Prostate gland (tissue), 2 donors: ENCODE measurements at regions of chr11 and their contacts with region 1.

Region 1: DNA sequence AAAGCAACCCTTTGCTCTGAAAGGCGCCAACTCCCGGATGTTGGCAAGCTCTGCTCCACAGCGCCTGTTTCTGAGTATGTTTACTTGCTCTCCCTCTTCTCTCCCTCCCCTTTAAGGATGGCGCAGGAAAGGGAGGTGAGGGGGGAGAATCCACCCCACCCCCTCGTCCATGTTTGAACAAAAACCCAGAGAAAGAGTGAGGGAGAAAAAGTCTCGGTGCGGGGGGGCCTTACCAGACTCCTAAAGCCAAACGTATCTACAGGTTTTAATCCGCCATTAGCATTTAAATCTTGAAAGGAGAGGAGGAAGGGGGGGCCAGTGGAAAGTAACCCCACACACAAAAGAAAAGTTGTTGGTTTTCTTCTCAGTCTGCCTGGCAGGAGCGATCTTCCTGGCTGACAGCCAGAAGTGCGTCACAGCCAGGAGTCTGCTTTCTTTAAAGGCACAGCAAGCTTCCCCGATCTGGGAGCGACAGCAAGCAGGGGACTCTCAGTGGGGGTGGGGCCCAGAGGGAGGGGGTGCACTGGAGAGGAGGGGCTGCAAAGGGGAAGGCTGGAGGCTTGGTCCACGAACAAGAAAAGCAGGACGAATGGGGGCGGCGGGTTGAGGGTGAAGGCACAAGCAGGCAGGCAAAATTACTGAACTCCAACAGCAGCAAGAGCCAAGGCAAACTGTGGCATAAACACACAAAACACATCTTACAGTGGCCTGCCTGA is 39.5 kb downstream of the NUMA1 start:
- DNase-seq: peak; percentile 97
- H3K4me3 ChIP-seq: peak overlapping the region; percentile 38 to 51
- H3K27ac ChIP-seq: peak overlapping the region; percentile 97 to 98
- H3K4me1 ChIP-seq: peaks cover 24% of the 10 kb centered on the region
- H3K27me3 ChIP-seq: no peaks in the 10 kb centered on the region
- CTCF ChIP-seq: no peak
- POLR2A ChIP-seq: peak; percentile 57

Region 2: DNA sequence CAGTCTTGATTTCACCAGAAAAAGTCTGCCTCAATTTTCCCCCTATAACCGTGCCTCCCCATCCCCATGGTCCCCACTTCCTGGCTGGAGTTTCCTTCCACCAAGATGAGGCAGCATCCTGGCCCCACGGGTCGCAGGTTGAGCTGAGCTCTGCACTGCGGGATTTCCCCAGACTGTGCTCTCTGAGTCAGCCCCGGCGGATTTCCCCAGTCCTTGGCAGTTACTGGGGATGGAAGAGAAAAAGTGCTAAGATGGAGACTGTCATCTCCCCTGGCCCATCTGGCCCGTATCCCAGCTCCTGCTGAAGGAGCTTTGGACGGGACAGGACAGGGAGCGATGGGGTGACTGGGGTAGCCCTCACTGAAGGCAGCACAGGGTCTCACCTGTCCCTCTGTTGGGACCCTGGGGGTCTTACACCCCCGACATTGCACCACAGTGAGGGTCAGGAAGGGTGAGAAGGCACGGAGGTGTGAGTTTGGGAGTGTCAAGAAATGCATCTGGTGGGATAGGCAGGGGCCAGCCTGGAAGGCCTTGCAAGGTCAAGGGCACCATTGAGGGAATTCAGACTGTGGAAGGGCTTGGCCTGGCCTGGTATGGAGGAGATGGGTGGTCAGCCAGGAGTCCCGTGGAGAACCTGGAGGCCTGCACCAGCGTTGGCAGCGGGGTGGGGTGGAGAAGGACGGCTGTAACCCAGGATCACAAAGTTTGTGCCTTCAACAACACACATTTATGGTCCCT is 551.4 kb before region 1 on chr11:
- intact Hi-C with region 1: no loop called
- DNase-seq: no peak
- H3K4me3 ChIP-seq: no peak overlapping the region
- H3K27ac ChIP-seq: no peak overlapping the region
- H3K4me1 ChIP-seq: no peaks in the 10 kb centered on the region
- H3K27me3 ChIP-seq: no peaks in the 10 kb centered on the region
- CTCF ChIP-seq: no peak
- POLR2A ChIP-seq: no peak

Region 3: GRCh38 chr11:72080256-72080974 is 39.5 kb after region 1 on chr11 and contains the starts of genes LRRC51 and NUMA1:
- intact Hi-C with region 1: loop called (anchors 2 kb)
- DNase-seq: peak; percentile 100
- H3K4me3 ChIP-seq: peak within 1 kb of the TSS; percentile 59 to 70
- H3K27ac ChIP-seq: peak within 1 kb of the TSS; percentile 95 to 97
- H3K4me1 ChIP-seq: peaks cover 21% of the 10 kb centered on the region
- H3K27me3 ChIP-seq: no peaks in the 10 kb centered on the region
- CTCF ChIP-seq: no peak
- POLR2A ChIP-seq: peak; percentile 80
- total RNA-seq, gene LRRC51: 13.1 to 25.1 TPM
- total RNA-seq, gene NUMA1: 623 to 712 TPM

Region 4: GRCh38 chr11:72222907-72223614 is 182.2 kb after region 1 on chr11:
- intact Hi-C with region 1: loop called (anchors 10 kb)
- DNase-seq: peak; percentile 94
- H3K4me3 ChIP-seq: peak overlapping the region; percentile 85 to 86
- H3K27ac ChIP-seq: peak overlapping the region; percentile 98 to 99
- H3K4me1 ChIP-seq: peaks cover 8% of the 10 kb centered on the region
- H3K27me3 ChIP-seq: no peaks in the 10 kb centered on the region
- CTCF ChIP-seq: peak in 3 of 4 experiments; percentile 46 to 69 (median 65)
- POLR2A ChIP-seq: peak; percentile 72

Region 5: DNA sequence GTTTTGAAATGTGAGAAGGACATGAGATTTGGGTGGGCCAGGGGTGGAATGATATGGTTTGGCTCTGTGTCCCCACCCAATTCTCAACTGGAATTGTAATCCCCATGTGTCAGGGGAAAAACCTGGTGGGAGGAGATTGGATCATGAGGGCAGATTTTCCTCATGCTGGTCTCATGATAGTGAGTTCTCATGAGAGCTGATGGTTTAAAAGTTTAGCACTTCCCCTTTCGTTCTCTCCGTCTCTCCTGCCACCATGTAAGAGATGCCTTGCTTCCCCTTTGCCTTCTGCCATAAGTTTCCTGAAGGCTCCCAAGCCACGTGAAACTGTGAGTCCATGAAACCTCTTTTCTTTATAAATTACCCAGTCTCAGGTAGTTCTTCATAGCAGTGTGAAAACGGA is 987.7 kb after region 1 on chr11:
- intact Hi-C with region 1: no loop called
- DNase-seq: no peak
- H3K4me3 ChIP-seq: no peak overlapping the region
- H3K27ac ChIP-seq: no peak overlapping the region
- H3K4me1 ChIP-seq: no peaks in the 10 kb centered on the region
- H3K27me3 ChIP-seq: no peaks in the 10 kb centered on the region
- CTCF ChIP-seq: no peak
- POLR2A ChIP-seq: no peak